Activated CD4-positive, alpha-beta T cell treated with anti-CD3 and anti-CD28 coated beads, Interleukin-2, amount 10 ng/mL, durations not matched to agents 24 days and 14 days (primary cell): ENCODE measurements at regions of chr2 and their contacts with region 1.

Region 1: DNA sequence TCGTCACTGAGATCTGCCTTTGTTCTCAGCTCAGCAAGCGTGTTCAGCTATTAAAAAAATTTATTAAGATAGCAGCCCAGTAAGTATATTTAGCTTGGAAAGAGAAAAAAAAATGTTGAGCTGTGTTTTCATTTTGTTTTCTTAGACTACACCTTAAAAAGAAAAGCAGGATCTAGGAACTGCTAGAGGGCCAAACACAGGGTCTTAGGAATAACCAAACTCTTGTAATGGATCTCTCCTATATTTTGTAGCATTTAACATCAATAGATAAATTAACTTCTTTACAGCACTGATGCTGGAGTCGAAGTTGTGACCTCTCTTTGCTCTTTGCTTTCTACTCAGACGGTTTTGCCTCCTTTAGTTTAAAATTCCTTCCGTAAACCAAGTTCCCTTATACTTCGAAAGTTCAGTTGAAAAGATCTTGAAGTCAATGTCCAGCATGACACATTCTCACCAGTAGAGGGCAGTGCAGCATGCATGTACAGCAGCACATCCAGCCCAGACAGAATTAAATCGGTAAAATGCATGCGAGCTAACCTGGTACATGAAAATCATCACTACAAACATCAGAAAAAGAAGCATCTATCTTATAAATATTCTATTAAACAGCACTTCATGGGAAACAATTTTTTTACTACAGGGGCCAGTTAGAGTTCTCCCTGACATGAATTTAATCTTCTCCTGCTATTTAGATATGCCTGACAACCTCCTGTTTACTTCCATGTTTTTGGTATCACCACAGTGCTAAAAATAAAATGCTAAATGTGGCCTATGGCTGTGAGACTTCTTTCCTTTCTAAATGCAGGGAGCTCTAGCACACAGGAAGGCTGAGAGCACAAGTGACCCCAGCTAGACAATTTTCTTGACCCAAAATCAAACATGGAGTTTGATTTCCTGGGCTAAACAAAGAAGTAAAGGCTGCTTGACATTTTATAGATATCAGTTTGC is 48.2 kb upstream of the MAP3K20 start:
- DNase-seq: peak; percentile 92
- H3K4me3 Mint-ChIP-seq: no peak overlapping the region
- H3K27ac Mint-ChIP-seq: no peak overlapping the region
- H3K4me1 Mint-ChIP-seq: peaks cover 3% of the 10 kb centered on the region
- H3K27me3 Mint-ChIP-seq: peaks cover 13% of the 10 kb centered on the region

Region 2: GRCh38 chr2:173075781-173076580 is 48.5 kb after region 1 on chr2 and contains the start of gene MAP3K20:
- intact Hi-C with region 1: loop called (anchors 1 kb)
- DNase-seq: peak; percentile 90
- H3K4me3 Mint-ChIP-seq: peak within 1 kb of the TSS; percentile 83
- H3K27ac Mint-ChIP-seq: peak within 1 kb of the TSS; percentile 79
- H3K4me1 Mint-ChIP-seq: peaks cover 22% of the 10 kb centered on the region
- H3K27me3 Mint-ChIP-seq: peaks cover 30% of the 10 kb centered on the region
- total RNA-seq, gene MAP3K20: 17.9 and 19.1 TPM in 2 replicates

Region 3: GRCh38 chr2:173210270-173211196 is 183.1 kb after region 1 on chr2:
- intact Hi-C with region 1: loop called (anchors 1 kb)
- DNase-seq: peak; percentile 87
- H3K4me3 Mint-ChIP-seq: no peak overlapping the region
- H3K27ac Mint-ChIP-seq: no peak overlapping the region
- H3K4me1 Mint-ChIP-seq: peaks cover 6% of the 10 kb centered on the region
- H3K27me3 Mint-ChIP-seq: no peaks in the 10 kb centered on the region

Region 4: DNA sequence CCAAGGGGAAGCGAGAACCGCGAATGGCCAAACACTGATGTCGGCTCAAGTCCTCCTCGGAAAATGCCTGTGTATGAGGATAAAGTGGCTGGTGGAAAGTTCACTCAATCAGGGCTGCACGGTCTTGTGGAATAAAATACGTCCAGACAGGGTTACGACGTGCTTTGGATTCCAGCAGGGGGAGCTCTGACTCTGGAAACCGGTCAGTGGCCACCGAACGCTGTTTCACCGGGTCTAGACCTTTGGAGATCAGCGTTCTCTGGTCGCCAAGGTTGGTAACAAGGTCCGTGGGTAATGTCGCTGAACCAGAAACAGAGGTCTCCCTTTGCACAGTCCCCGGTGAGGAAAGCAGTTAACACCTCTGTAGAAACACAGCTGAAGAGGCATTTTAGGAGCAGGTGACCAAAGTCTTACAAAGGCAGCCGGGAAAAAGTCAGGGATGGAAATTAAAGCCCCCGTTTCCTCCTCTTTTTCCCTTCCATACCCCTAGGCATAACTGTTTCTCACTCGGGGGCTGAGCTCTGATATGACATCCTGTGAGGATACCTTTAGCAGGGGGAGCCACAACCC is 375.0 kb after region 1 on chr2:
- intact Hi-C with region 1: loop called (anchors 5 kb)
- DNase-seq: peak; percentile 92
- H3K4me3 Mint-ChIP-seq: no peak overlapping the region
- H3K27ac Mint-ChIP-seq: no peak overlapping the region
- H3K4me1 Mint-ChIP-seq: peaks cover 5% of the 10 kb centered on the region
- H3K27me3 Mint-ChIP-seq: peaks cover 58% of the 10 kb centered on the region

Region 5: DNA sequence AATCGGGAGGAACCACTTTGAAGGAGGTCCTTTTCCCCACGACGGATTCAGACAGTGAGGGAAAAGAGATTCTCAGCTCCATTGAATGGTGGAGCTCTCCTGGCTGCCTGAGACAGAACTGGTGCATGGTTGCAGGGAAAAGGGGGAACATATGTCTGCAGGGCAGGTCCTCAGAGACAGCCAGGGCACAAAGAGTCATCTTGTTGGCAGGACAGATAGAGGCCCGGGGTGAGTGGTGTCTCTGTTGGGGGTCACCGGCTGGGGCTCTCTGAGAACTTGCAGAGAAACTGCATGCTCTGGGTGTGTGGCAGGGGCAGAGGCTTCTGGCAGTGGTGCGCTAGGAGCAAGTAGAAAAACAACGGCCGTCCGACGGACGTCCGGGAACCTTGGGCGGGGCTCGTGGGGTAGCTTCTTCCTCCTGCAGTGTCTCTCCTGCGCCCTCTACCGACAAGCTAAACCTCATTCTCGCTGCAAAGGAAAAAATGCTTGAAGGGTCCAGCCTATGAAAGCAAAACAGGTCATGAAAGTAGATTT is 421.6 kb after region 1 on chr2:
- intact Hi-C with region 1: loop called (anchors 2 kb)
- DNase-seq: peak; percentile 89
- H3K4me3 Mint-ChIP-seq: peak overlapping the region; percentile 64
- H3K27ac Mint-ChIP-seq: peak overlapping the region; percentile 32
- H3K4me1 Mint-ChIP-seq: peaks cover 11% of the 10 kb centered on the region
- H3K27me3 Mint-ChIP-seq: peaks cover 20% of the 10 kb centered on the region